OCI-LY7 (cell line): ENCODE measurements at regions of chr1 and their contacts with region 1.

Region 1: DNA sequence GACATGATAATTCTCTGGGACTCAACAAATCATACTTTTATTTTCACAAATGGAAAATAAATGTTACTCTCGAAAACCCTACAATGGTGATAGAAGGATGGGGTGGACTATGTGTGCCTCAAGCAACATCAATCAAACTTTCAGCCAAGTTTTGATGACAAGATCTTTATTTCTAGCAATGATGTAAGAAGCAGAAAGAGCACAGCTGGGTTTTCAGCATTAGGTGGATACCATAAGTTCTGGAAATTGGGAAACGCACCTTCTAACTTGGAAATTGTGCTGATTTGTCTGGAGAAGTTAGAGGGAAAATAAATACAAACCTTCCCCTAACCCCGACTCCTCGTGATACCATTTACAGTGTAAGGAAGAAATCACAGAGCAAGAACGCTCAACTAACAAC is 320.3 kb downstream of the PAPPA2 start:
- DNase-seq: no peak
- H3K4me3 ChIP-seq: no peak overlapping the region
- H3K27ac ChIP-seq: no peak overlapping the region
- H3K4me1 ChIP-seq: no peaks in the 10 kb centered on the region
- CTCF ChIP-seq: no peak

Region 2: DNA sequence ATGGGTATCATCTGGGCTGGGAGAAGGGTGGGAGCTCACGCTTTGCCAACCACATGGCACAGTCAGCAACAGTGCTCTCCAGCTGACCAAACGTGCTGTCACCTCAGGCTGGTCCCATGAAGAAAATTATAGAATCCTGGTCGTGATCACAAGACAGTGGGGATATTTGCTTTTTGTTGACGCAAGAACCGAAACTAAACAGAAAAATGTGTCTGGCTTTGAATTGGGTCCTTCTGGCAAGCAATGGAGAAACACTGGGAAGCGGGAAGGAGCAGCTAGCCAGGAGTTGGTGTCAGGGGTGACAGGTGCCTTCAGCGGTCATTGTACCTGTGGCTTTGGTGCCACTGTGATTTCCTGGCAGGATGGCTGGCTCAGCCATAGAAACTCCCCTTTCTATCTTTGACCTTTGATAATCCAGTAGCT is 15.6 kb before region 1 on chr1:
- CTCF ChIA-PET with region 1: no interaction called
- POLR2A ChIA-PET with region 1: no interaction called
- intact Hi-C with region 1: loop called (anchors 1 kb)
- DNase-seq: no peak
- H3K4me3 ChIP-seq: no peak overlapping the region
- H3K27ac ChIP-seq: no peak overlapping the region
- H3K4me1 ChIP-seq: no peaks in the 10 kb centered on the region
- CTCF ChIP-seq: no peak

Region 3: GRCh38 chr1:176820391-176821031 is 37.2 kb after region 1 on chr1:
- CTCF ChIA-PET with region 1: no interaction called
- POLR2A ChIA-PET with region 1: no interaction called
- intact Hi-C with region 1: no loop called
- DNase-seq: no peak
- H3K4me3 ChIP-seq: no peak overlapping the region
- H3K27ac ChIP-seq: no peak overlapping the region
- H3K4me1 ChIP-seq: no peaks in the 10 kb centered on the region
- CTCF ChIP-seq: no peak